AG04450 (cell line): ENCODE measurements at regions of chr3 and their contacts with region 1.

Region 1: DNA sequence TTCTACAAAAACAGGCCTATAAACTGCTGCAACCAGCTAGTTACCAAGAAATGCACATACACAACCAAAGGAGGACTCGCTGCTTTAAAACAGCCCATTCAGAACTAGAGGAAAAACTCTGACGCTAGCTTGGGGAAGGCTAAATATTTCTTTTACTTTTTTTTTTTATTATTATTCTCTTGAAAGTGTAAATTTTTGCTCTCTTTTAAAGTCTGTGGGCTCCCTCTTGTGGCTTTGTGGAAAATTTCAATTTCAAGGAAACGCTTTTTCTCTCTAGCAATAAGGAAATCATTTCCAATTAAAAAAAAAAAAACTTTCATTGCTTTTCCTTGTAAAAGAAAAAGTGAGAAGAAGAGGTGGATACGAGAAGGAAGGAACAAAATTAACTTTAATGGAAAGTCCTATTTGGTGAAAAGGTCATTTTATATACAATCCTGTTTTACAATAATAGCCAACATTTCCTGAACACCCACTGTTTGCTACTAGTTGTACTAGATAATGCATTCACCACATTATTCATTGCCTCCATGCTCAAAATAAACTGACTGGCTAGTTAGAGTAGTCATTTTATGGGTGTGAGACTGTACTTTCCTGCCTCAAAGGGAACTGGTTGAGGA is 51.2 kb upstream of the SAMMSON start:
- DNase-seq: peak; percentile 38
- H3K4me3 ChIP-seq: no peak overlapping the region
- H3K27ac ChIP-seq: no peak overlapping the region
- H3K27me3 ChIP-seq: no peaks in the 10 kb centered on the region
- CTCF ChIP-seq: peak; percentile 63

Region 2: GRCh38 chr3:69671082-69671952 is 277.0 kb before region 1 on chr3:
- CTCF ChIA-PET with region 1: interaction called, 13 read pairs
- POLR2A ChIA-PET with region 1: no interaction called
- DNase-seq: no peak
- H3K4me3 ChIP-seq: no peak overlapping the region
- H3K27ac ChIP-seq: no peak overlapping the region
- H3K27me3 ChIP-seq: peaks cover 10% of the 10 kb centered on the region
- CTCF ChIP-seq: peak; percentile 76

Region 3: DNA sequence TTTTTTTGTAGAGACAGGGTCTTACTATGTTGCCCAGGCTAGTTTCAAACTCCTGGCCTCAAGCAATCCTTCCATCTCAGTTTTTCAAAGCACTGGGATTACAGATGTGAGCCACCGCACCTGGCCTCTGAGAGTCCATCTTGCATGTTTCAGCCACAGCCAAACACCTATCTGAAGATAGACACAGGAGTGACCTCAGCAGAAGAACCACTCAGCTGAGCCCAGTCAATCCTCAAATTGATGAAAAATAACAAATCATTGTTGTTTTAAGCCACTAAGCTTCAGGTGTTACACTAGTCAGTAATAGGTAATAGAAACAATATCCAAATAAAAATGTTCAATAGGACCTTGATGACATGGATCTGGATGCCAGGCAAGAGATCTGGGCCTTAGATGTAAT is 247.4 kb before region 1 on chr3:
- CTCF ChIA-PET with region 1: no interaction called
- POLR2A ChIA-PET with region 1: no interaction called
- DNase-seq: no peak
- H3K4me3 ChIP-seq: no peak overlapping the region
- H3K27ac ChIP-seq: no peak overlapping the region
- H3K27me3 ChIP-seq: no peaks in the 10 kb centered on the region
- CTCF ChIP-seq: no peak